Naive thymus-derived CD4-positive, alpha-beta T cell (primary cell): ENCODE measurements at regions of chr13 and their contacts with region 1.

Region 1: GRCh38 chr13:99087096-99087953 is 109.5 kb upstream of the DOCK9 start:
- DNase-seq: peak; percentile 83 to 95 (median 92)
- ATAC-seq: peak; percentile 85
- H3K4me3 ChIP-seq: peak overlapping the region; percentile 97
- H3K4me3 Mint-ChIP-seq: peak overlapping the region; percentile 92 to 100 (median 98)
- H3K27ac ChIP-seq: peak overlapping the region; percentile 95
- H3K27ac Mint-ChIP-seq: peak overlapping the region; percentile 96 to 99 (median 98)
- H3K4me1 ChIP-seq: peaks cover 29 to 31% of the 10 kb centered on the region in 2 donors
- H3K4me1 Mint-ChIP-seq: peaks cover 26 to 53% (median 42%) of the 10 kb centered on the region in 7 donors
- H3K27me3 ChIP-seq: no peaks in the 10 kb centered on the region
- H3K27me3 Mint-ChIP-seq: peaks cover 0 to 5% (median 3%) of the 10 kb centered on the region in 5 donors

Region 2: GRCh38 chr13:98576963-98577822 is 510.1 kb before region 1 on chr13 and contains the start of gene STK24:
- CTCF ChIA-PET with region 1: no interaction called
- POLR2A ChIA-PET with region 1: interaction called, 3 read pairs
- intact Hi-C with region 1: loop called (anchors 5 to 10 kb)
- DNase-seq: peak in 5 of 9 donors; percentile 34 to 87 (median 66)
- ATAC-seq: peak; percentile 85
- H3K4me3 ChIP-seq: peak within 1 kb of the TSS; percentile 72
- H3K4me3 Mint-ChIP-seq: peak within 1 kb of the TSS; percentile 84 to 99 (median 93)
- H3K27ac ChIP-seq: peak within 1 kb of the TSS; percentile 85
- H3K27ac Mint-ChIP-seq: peak within 1 kb of the TSS; percentile 84 to 96 (median 93)
- H3K4me1 ChIP-seq: peaks cover 26 to 35% of the 10 kb centered on the region in 2 donors
- H3K4me1 Mint-ChIP-seq: peaks cover 35 to 48% (median 37%) of the 10 kb centered on the region in 7 donors
- H3K27me3 ChIP-seq: no peaks in the 10 kb centered on the region
- H3K27me3 Mint-ChIP-seq: no peaks in the 10 kb centered on the region
- total RNA-seq, gene STK24: 90.1 to 148 (median 121) TPM

Region 3: GRCh38 chr13:99045396-99045795 is 41.9 kb before region 1 on chr13:
- CTCF ChIA-PET with region 1: interaction called, 4 read pairs
- POLR2A ChIA-PET with region 1: interaction called, 77 read pairs
- intact Hi-C with region 1: loop called (anchors 1 kb)
- DNase-seq: no peak
- ATAC-seq: no peak
- H3K4me3 ChIP-seq: no peak overlapping the region
- H3K4me3 Mint-ChIP-seq: peak overlapping the region; percentile 60 to 88 (median 80)
- H3K27ac ChIP-seq: peak overlapping the region; percentile 70
- H3K27ac Mint-ChIP-seq: peak overlapping the region; percentile 85 to 97 (median 94)
- H3K4me1 ChIP-seq: peaks cover 79 to 93% of the 10 kb centered on the region in 2 donors
- H3K4me1 Mint-ChIP-seq: peaks cover 64 to 100% (median 89%) of the 10 kb centered on the region in 7 donors
- H3K27me3 ChIP-seq: no peaks in the 10 kb centered on the region
- H3K27me3 Mint-ChIP-seq: peaks cover 0 to 19% (median 0%) of the 10 kb centered on the region in 5 donors

Region 4: DNA sequence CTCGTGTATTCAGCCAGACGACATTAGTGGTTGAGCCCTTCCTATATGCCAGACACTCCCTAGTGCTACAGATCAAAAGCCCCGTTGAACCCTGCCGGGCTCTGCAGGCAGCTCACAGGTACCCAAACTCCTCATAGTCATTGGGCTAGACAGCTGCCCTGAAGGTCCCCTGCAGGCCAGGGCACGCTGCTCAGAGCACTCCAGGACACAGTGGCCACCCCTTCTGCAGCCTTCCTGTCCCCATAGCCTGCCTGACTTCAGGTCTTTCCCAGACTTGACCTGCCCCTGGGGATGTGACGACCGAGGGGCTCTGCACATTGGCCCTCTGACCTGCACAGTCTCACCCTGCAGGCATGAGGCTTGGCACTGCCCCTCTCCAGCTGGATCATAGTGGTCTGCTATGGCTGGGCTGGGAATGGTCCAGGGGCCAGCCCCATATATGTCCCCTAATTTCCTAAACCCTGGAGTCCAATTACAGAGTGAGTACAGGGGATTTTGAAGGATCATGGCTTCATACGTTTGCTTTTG is 49.2 kb after region 1 on chr13:
- CTCF ChIA-PET with region 1: no interaction called
- POLR2A ChIA-PET with region 1: no interaction called
- intact Hi-C with region 1: no loop called
- DNase-seq: no peak
- ATAC-seq: no peak
- H3K4me3 ChIP-seq: no peak overlapping the region
- H3K4me3 Mint-ChIP-seq: no peak overlapping the region
- H3K27ac ChIP-seq: no peak overlapping the region
- H3K27ac Mint-ChIP-seq: no peak overlapping the region
- H3K4me1 ChIP-seq: no peaks in the 10 kb centered on the region
- H3K4me1 Mint-ChIP-seq: no peaks in the 10 kb centered on the region
- H3K27me3 ChIP-seq: no peaks in the 10 kb centered on the region
- H3K27me3 Mint-ChIP-seq: peaks cover 0 to 18% (median 2%) of the 10 kb centered on the region in 5 donors

Region 5: GRCh38 chr13:99176309-99177276 is 89.3 kb after region 1 on chr13:
- CTCF ChIA-PET with region 1: interaction called, 13 read pairs
- POLR2A ChIA-PET with region 1: interaction called, 7 read pairs
- intact Hi-C with region 1: loop called in 1 of 2 experiments (anchors 1 kb)
- DNase-seq: peak; percentile 54 to 79 (median 71)
- ATAC-seq: peak; percentile 95
- H3K4me3 ChIP-seq: peak overlapping the region; percentile 1
- H3K4me3 Mint-ChIP-seq: peak overlapping the region; percentile 39 to 81 (median 72)
- H3K27ac ChIP-seq: no peak overlapping the region
- H3K27ac Mint-ChIP-seq: peak overlapping the region in 8 of 9 donors; percentile 34 to 77 (median 54)
- H3K4me1 ChIP-seq: peaks cover 22 to 24% of the 10 kb centered on the region in 2 donors
- H3K4me1 Mint-ChIP-seq: peaks cover 26 to 44% (median 39%) of the 10 kb centered on the region in 7 donors
- H3K27me3 ChIP-seq: no peaks in the 10 kb centered on the region
- H3K27me3 Mint-ChIP-seq: peaks cover 0 to 13% (median 0%) of the 10 kb centered on the region in 5 donors

Region 6: GRCh38 chr13:99366075-99366987 is 279.0 kb after region 1 on chr13:
- CTCF ChIA-PET with region 1: no interaction called
- POLR2A ChIA-PET with region 1: no interaction called
- intact Hi-C with region 1: loop called in 1 of 2 experiments (anchors 5 kb)
- DNase-seq: peak in 2 of 9 donors; percentile 21 to 41
- ATAC-seq: peak; percentile 30
- H3K4me3 ChIP-seq: peak overlapping the region; percentile 6
- H3K4me3 Mint-ChIP-seq: peak overlapping the region in 9 of 10 donors; percentile 46 to 87 (median 78)
- H3K27ac ChIP-seq: peak overlapping the region; percentile 78
- H3K27ac Mint-ChIP-seq: peak overlapping the region; percentile 50 to 100 (median 99)
- H3K4me1 ChIP-seq: peaks cover 76 to 81% of the 10 kb centered on the region in 2 donors
- H3K4me1 Mint-ChIP-seq: peaks cover 55 to 100% (median 95%) of the 10 kb centered on the region in 7 donors
- H3K27me3 ChIP-seq: no peaks in the 10 kb centered on the region
- H3K27me3 Mint-ChIP-seq: no peaks in the 10 kb centered on the region

Region 7: DNA sequence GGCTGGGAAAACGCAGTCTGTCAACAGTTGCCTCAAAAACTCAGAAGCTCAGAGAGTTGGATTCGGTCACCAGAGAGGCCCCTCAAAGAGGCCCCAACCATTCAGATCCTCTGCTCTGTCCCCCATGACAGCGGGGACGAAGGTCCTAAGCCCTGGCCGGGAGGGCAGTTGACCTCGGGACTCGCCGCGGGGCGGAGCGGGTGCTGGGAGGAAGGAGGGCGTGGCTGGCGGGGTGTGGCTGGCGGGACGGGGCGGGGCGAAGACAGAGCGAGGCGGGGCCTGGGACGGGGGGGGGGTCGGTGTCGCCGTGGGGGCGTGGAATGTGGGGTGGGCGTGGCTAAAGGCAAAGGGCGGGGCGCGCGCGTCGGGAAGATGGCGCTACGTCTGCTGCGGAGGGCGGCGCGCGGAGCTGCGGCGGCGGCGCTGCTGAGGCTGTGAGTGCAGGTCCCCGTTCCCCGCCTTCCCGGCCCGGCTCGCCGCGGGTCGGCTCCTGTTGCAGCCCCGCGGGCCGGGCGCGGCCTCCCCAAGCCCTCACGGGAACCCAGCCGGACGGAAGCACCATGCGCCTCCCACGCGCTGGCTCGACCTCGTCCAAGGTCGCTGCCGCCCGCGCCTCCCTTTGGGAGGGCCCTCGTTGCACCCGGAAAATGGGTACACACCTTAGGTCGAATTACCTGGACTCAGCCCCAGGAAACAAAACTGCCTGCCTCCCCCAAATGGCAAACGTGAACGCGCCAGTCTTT is 519.2 kb after region 1 on chr13:
- CTCF ChIA-PET with region 1: no interaction called
- POLR2A ChIA-PET with region 1: no interaction called
- intact Hi-C with region 1: loop called (anchors 1 to 2 kb)
- DNase-seq: peak; percentile 80 to 95 (median 87)
- ATAC-seq: peak; percentile 97
- H3K4me3 ChIP-seq: peak within 1 kb of the TSS; percentile 76
- H3K4me3 Mint-ChIP-seq: peak within 1 kb of the TSS; percentile 84 to 93 (median 92)
- H3K27ac ChIP-seq: peak within 1 kb of the TSS; percentile 83
- H3K27ac Mint-ChIP-seq: peak within 1 kb of the TSS; percentile 88 to 96 (median 93)
- H3K4me1 ChIP-seq: peaks cover 9 to 17% of the 10 kb centered on the region in 2 donors
- H3K4me1 Mint-ChIP-seq: peaks cover 28 to 69% (median 54%) of the 10 kb centered on the region in 7 donors
- H3K27me3 ChIP-seq: no peaks in the 10 kb centered on the region
- H3K27me3 Mint-ChIP-seq: peaks cover 0 to 11% (median 0%) of the 10 kb centered on the region in 5 donors